GM23248 (cell line): ENCODE measurements at regions of chr10 and their contacts with region 1.

Region 1: GRCh38 chr10:33211106-33211878 is 123.2 kb downstream of the NRP1 start:
- DNase-seq: peak; percentile 94
- H3K4me3 ChIP-seq: no peak overlapping the region
- H3K27ac ChIP-seq: peak overlapping the region; percentile 91
- H3K4me1 ChIP-seq: peaks cover 39% of the 10 kb centered on the region
- H3K27me3 ChIP-seq: no peaks in the 10 kb centered on the region

Region 2: DNA sequence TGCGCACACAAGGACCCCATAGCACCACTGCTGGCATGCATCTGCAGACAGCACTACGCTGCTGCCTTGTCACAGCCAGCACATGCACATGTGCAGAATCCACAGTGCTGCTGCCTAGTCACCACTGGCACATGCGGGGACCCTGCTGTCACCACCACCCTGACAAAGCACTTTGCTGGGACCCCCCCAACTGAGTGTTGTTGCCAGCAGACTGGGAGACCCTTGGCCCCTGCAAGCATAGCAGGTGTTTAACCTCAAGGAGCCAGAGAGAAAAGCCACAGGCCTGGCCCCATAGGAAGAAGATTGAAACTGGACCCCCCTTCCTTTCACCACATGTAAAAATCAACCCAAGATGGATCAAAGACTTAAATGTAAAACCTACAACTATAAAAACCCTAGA is 464.4 kb before region 1 on chr10:
- in situ Hi-C with region 1: no loop called
- DNase-seq: no peak
- H3K4me3 ChIP-seq: no peak overlapping the region
- H3K27ac ChIP-seq: no peak overlapping the region
- H3K4me1 ChIP-seq: no peaks in the 10 kb centered on the region; the same call in 1 of the 2 replicates
- H3K27me3 ChIP-seq: no peaks in the 10 kb centered on the region

Region 3: GRCh38 chr10:33073641-33074415 is 137.5 kb before region 1 on chr10:
- in situ Hi-C with region 1: no loop called
- DNase-seq: peak; percentile 48
- H3K4me3 ChIP-seq: peak overlapping the region; percentile 1; the same call in 1 of the 2 replicates
- H3K27ac ChIP-seq: no peak overlapping the region
- H3K4me1 ChIP-seq: no peaks in the 10 kb centered on the region
- H3K27me3 ChIP-seq: no peaks in the 10 kb centered on the region

Region 4: GRCh38 chr10:33386971-33387370 is 175.7 kb after region 1 on chr10:
- in situ Hi-C with region 1: no loop called
- DNase-seq: no peak
- H3K4me3 ChIP-seq: no peak overlapping the region
- H3K27ac ChIP-seq: no peak overlapping the region
- H3K4me1 ChIP-seq: peaks cover 18% of the 10 kb centered on the region
- H3K27me3 ChIP-seq: no peaks in the 10 kb centered on the region

Region 5: DNA sequence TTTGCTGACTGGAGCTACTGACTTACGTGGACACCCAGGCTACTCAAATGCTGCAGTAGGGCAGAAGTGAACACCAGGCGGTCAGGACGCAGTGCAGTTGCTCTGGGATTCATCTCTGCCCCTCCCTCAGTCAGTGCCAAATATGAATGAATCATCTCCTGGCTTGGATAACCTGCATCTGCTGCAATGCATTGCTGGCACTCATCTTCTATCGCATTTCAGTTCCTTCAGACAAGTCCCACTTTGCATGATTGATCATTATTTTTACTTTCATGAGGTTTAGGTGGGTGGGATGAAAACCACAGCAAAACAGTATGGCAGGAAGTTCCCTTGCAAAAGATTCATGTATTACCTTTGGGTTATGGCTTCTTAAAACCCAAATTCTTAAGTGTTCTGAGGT is 347.8 kb after region 1 on chr10:
- in situ Hi-C with region 1: no loop called
- DNase-seq: peak; percentile 92
- H3K4me3 ChIP-seq: no peak overlapping the region
- H3K27ac ChIP-seq: no peak overlapping the region
- H3K4me1 ChIP-seq: peaks cover 9% of the 10 kb centered on the region; the same call in 1 of the 2 replicates
- H3K27me3 ChIP-seq: no peaks in the 10 kb centered on the region

Region 6: DNA sequence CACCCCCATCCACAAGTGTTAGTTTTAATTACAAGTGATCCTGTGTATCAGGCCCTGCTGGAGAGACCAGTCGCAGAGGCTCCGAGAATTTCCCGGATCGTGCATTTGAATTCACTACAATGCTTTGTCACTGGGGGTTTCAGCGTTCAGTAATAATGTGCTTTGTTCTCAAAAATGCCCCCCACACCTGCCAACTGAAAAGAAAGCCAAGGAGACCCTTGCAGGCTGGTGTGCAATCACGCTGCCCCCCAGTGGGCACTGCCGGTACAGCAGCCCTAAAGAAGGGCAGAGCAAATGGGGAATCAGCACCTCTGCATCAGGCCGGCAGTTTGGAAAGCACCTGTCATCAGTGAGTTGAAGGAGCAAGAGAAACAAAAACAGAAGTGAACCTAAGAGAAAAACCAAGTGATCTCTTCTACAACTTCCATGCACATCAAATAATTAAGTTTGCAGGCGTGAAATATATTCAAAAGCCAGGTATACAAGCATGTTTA is 1426.2 kb after region 1 on chr10:
- in situ Hi-C with region 1: loop called (anchors 25 kb)
- DNase-seq: peak; percentile 46
- H3K4me3 ChIP-seq: no peak overlapping the region
- H3K27ac ChIP-seq: no peak overlapping the region
- H3K4me1 ChIP-seq: peaks cover 6% of the 10 kb centered on the region; the same call in 1 of the 2 replicates
- H3K27me3 ChIP-seq: no peaks in the 10 kb centered on the region